Activated CD8-positive, alpha-beta T cell treated with anti-CD3 and anti-CD28 coated beads for 36 hours (primary cell): ENCODE measurements at regions of chr6 and their contacts with region 1.

Region 1: DNA sequence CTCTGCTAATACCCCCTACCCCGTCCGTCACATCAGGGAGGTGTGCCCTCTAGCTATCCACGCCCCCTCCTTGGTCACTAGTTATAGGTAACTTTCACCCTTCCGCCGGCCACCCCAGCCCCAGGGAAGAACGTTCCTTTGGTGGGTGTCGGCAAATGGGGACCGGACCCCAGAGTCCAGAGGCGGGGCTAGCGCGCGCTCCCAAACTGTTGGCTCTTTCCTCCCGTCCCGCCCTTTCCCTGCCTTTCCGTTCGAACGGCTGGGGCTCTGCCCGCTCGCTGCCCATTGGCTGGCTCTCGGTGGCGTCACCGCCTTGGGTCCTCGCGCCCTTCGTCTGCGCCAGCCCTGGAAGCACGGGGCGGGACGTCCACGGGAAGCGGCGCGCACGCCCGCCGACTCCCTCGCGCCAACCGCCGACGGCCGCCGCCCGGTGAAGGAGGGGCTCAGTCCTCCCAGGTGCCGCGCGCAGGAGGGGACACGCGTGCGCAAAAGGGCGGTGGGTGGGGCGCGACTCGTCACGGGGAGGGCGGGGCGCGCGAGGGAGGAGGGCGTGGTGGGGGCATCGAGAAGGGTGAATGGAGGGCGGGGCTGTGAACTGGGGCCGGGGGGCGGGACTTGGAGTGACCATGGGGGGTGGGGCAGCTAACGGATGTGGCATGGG is 634 bp upstream of the PHF1 start:
- DNase-seq: peak; percentile 97
- ATAC-seq: peak; percentile 81
- H3K4me3 Mint-ChIP-seq: peak overlapping the region; percentile 87
- H3K27ac Mint-ChIP-seq: peak overlapping the region; percentile 90
- H3K4me1 Mint-ChIP-seq: peaks cover 46% of the 10 kb centered on the region
- H3K27me3 Mint-ChIP-seq: no peaks in the 10 kb centered on the region
- CTCF ChIP-seq: no peak

Region 2: GRCh38 chr6:33317669-33318425 is 92.3 kb before region 1 on chr6 and contains the start of gene ZBTB22:
- CTCF ChIA-PET with region 1: no interaction called
- POLR2A ChIA-PET with region 1: no interaction called
- intact Hi-C with region 1: no loop called
- DNase-seq: peak; percentile 100
- ATAC-seq: peak; percentile 67
- H3K4me3 Mint-ChIP-seq: peak within 1 kb of the TSS; percentile 97
- H3K27ac Mint-ChIP-seq: peak within 1 kb of the TSS; percentile 97
- H3K4me1 Mint-ChIP-seq: peaks cover 68% of the 10 kb centered on the region
- H3K27me3 Mint-ChIP-seq: no peaks in the 10 kb centered on the region
- CTCF ChIP-seq: no peak
- total RNA-seq, gene ZBTB22: 7.2 to 7.5 TPM

Region 3: DNA sequence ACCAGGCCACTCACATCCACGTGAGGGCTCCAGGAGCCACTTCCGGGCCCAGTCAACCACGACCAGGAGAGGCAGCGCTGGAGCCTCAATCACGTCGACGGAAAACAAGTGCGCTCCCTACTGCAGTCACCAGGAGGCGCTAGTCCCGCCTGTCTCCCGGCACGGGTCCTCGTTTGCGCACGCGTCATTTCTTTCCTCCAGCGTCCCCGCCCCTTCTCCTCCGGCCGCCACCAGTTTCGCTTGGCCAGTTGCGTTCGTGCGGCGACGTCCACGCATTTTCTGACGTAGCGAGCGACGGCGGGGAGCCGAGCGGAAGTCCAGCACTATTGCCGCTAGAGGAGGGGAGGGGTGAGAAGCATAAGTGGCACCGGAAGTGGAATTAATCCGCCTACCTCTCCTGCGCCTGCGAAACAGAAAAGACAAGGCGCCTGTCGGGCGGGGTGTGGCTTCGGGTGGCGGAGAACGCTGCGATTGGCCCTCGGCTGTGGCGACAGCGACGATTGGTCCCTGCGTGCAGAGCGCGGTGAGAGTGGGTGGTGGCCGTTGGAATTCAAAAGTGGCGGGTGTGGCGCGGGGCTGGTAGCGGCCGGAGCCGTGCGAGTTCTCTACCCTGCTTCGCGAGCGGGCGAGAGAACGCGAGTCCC is 18.8 kb before region 1 on chr6 and contains the start of gene KIFC1:
- CTCF ChIA-PET with region 1: interaction called, 8 read pairs
- POLR2A ChIA-PET with region 1: interaction called, 5 read pairs
- intact Hi-C with region 1: loop called (anchors 1 kb)
- DNase-seq: peak; percentile 99
- ATAC-seq: peak; percentile 91
- H3K4me3 Mint-ChIP-seq: peak within 1 kb of the TSS; percentile 89
- H3K27ac Mint-ChIP-seq: peak within 1 kb of the TSS; percentile 93
- H3K4me1 Mint-ChIP-seq: peaks cover 36% of the 10 kb centered on the region
- H3K27me3 Mint-ChIP-seq: no peaks in the 10 kb centered on the region
- CTCF ChIP-seq: peak; percentile 96
- total RNA-seq, gene KIFC1: 93.4 to 96.0 TPM